ENCODE measurements at regions of chr12 and their contacts with region 1.

Region 1: GRCh38 chr12:56688129-56688845 is at the start of gene PTGES3:
- DNase-seq: peak; percentile 99
- H3K4me3 Mint-ChIP-seq: peak within 1 kb of the TSS; percentile 89
- H3K27ac Mint-ChIP-seq: peak within 1 kb of the TSS; percentile 97
- H3K4me1 Mint-ChIP-seq: peaks cover 5% of the 10 kb centered on the region
- H3K27me3 Mint-ChIP-seq: no peaks in the 10 kb centered on the region
- CTCF ChIP-seq: no peak
- total RNA-seq, gene PTGES3: 212 and 228 TPM in 2 replicates

Region 2: GRCh38 chr12:56657416-56658379 is 30.6 kb before region 1 on chr12:
- CTCF ChIA-PET with region 1: interaction called, 3 read pairs
- POLR2A ChIA-PET with region 1: interaction called, 12 read pairs
- intact Hi-C with region 1: no loop called
- DNase-seq: peak; percentile 43
- H3K4me3 Mint-ChIP-seq: no peak overlapping the region
- H3K27ac Mint-ChIP-seq: no peak overlapping the region
- H3K4me1 Mint-ChIP-seq: peaks cover 6% of the 10 kb centered on the region
- H3K27me3 Mint-ChIP-seq: no peaks in the 10 kb centered on the region
- CTCF ChIP-seq: no peak

Region 3: DNA sequence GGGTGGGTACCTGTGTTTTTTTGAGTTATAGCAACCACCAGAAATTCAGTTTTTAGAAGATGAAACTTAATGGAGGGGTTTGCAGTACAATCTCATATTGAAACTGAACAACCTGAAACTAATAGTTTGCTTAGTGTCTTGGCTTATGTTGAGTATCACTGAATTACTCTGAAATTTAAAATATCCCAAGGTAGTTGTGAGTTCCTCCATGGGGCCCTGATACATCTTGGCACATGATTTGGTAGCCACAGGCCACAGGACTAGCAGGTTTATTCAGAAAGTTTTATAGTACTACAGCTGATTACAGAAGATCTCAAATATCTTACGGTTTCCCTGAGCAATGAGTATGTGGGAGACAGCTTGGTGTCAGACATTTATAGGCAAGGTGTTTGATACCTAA is 10.6 kb before region 1 on chr12:
- CTCF ChIA-PET with region 1: interaction called, 5 read pairs
- POLR2A ChIA-PET with region 1: interaction called, 24 read pairs
- intact Hi-C with region 1: no loop called
- DNase-seq: no peak
- H3K4me3 Mint-ChIP-seq: no peak overlapping the region
- H3K27ac Mint-ChIP-seq: no peak overlapping the region
- H3K4me1 Mint-ChIP-seq: peaks cover 6% of the 10 kb centered on the region
- H3K27me3 Mint-ChIP-seq: no peaks in the 10 kb centered on the region
- CTCF ChIP-seq: no peak

Region 4: GRCh38 chr12:56716458-56716857 is 28.2 kb after region 1 on chr12:
- CTCF ChIA-PET with region 1: no interaction called
- POLR2A ChIA-PET with region 1: interaction called, 137 read pairs
- intact Hi-C with region 1: no loop called
- DNase-seq: no peak
- H3K4me3 Mint-ChIP-seq: no peak overlapping the region
- H3K27ac Mint-ChIP-seq: no peak overlapping the region
- H3K4me1 Mint-ChIP-seq: peaks cover 46% of the 10 kb centered on the region
- H3K27me3 Mint-ChIP-seq: no peaks in the 10 kb centered on the region
- CTCF ChIP-seq: no peak

Region 5: GRCh38 chr12:56878010-56878339 is 189.7 kb after region 1 on chr12:
- CTCF ChIA-PET with region 1: no interaction called
- POLR2A ChIA-PET with region 1: no interaction called
- intact Hi-C with region 1: no loop called
- DNase-seq: peak; percentile 11
- H3K4me3 Mint-ChIP-seq: no peak overlapping the region
- H3K27ac Mint-ChIP-seq: no peak overlapping the region
- H3K4me1 Mint-ChIP-seq: peaks cover 13% of the 10 kb centered on the region
- H3K27me3 Mint-ChIP-seq: no peaks in the 10 kb centered on the region
- CTCF ChIP-seq: no peak

Region 6: GRCh38 chr12:57078519-57079404 is 390.5 kb after region 1 on chr12 and contains the start of gene NEMP1:
- CTCF ChIA-PET with region 1: no interaction called
- POLR2A ChIA-PET with region 1: interaction called, 13 read pairs
- intact Hi-C with region 1: no loop called
- DNase-seq: peak; percentile 100
- H3K4me3 Mint-ChIP-seq: peak within 1 kb of the TSS; percentile 100
- H3K27ac Mint-ChIP-seq: peak within 1 kb of the TSS; percentile 97
- H3K4me1 Mint-ChIP-seq: no peaks in the 10 kb centered on the region
- H3K27me3 Mint-ChIP-seq: no peaks in the 10 kb centered on the region
- CTCF ChIP-seq: no peak
- total RNA-seq, gene NEMP1: 17.5 and 22.5 TPM in 2 replicates

Measured in MCF 10A (cell line).